ENCODE measurements at regions of chr1 and their contacts with region 1.

Region 1: GRCh38 chr1:100530880-100531487 is 7.0 kb upstream of the GPR88 start:
- DNase-seq: peak; percentile 57
- H3K4me3 Mint-ChIP-seq: no peak overlapping the region
- H3K27ac Mint-ChIP-seq: no peak overlapping the region
- H3K4me1 Mint-ChIP-seq: peaks cover 25% of the 10 kb centered on the region
- H3K27me3 Mint-ChIP-seq: no peaks in the 10 kb centered on the region

Region 2: GRCh38 chr1:99994496-99994895 is 536.5 kb before region 1 on chr1:
- CTCF ChIA-PET with region 1: no interaction called
- intact Hi-C with region 1: no loop called
- DNase-seq: no peak
- H3K4me3 Mint-ChIP-seq: no peak overlapping the region
- H3K27ac Mint-ChIP-seq: no peak overlapping the region
- H3K4me1 Mint-ChIP-seq: peaks cover 3% of the 10 kb centered on the region
- H3K27me3 Mint-ChIP-seq: no peaks in the 10 kb centered on the region

Region 3: DNA sequence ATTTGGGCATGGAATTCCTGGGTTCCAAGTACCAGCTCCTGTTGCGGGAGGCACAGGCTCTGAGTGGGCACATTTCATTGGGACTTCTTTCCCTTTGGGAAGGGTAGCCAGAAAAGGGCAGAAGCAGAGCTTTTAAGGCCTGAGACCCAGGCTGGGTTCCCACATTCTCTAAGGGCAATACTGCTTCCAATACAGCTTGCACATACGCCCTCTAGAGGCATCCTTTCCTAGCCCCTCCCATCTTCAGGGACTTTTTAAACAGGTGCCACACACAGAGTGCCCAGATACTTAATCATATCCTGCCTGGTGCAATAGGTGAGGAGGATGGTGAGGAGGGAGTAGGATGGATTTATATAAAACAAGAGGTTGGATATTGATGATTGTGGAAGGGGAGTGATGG is 12.7 kb after region 1 on chr1:
- CTCF ChIA-PET with region 1: interaction called, 17 read pairs
- intact Hi-C with region 1: loop called (anchors 1 kb)
- DNase-seq: peak; percentile 75
- H3K4me3 Mint-ChIP-seq: no peak overlapping the region
- H3K27ac Mint-ChIP-seq: no peak overlapping the region
- H3K4me1 Mint-ChIP-seq: peaks cover 2% of the 10 kb centered on the region
- H3K27me3 Mint-ChIP-seq: peaks cover 23% of the 10 kb centered on the region

Region 4: DNA sequence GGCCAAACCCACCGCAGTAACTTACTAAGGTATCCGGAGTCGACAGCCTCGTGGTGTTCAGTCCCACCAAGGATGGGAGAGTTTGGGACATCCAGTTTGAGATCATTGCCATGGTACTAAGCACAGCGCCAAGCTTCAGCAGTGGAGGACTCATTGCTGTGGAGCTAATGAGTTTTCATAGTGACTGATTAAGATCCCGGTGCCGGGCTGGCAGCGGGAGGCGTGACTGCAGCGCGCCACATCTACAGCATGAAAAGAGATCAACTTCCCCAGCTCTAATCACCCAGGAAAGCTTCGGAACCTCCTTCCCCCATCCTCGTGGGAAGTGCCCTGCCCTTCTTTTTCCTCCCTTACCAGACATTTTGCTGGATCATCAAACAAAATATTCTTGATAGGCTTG is 1315.8 kb after region 1 on chr1:
- CTCF ChIA-PET with region 1: no interaction called
- intact Hi-C with region 1: no loop called
- DNase-seq: no peak
- H3K4me3 Mint-ChIP-seq: no peak overlapping the region
- H3K27ac Mint-ChIP-seq: no peak overlapping the region
- H3K4me1 Mint-ChIP-seq: no peaks in the 10 kb centered on the region
- H3K27me3 Mint-ChIP-seq: peaks cover 5% of the 10 kb centered on the region

Measured in activated naive CD4-positive, alpha-beta T cell treated with anti-CD3 and anti-CD28 coated beads for 36 hours (primary cell).